Calu3 (cell line): ENCODE measurements at regions of chr2 and their contacts with region 1.

Region 1: DNA sequence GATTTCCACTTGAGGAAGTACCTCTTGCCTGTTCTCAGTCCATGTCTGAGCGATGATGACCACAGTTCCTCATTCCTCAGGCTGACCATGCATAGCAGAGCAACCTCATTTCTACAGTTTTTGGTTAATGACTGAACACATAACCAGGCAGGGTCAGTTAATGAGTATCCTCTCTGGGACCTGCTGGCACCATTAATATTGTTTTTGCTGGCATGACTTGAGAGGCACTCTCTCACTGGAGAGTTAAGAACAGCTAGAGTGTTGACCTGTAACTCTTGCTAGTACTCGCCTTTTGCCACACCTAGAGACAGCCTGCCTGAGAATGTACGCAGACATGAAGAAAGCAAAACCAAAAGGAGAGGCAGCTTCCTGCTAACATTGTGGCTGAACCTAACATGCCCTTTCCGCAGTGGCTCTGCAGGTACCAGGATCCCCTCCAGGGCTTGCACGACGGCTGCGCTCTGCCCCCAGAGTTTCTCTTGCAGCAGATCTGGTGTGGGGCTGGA is 23.9 kb downstream of the PECR start:
- DNase-seq: peak; percentile 85
- H3K4me3 Mint-ChIP-seq: peak overlapping the region; percentile 58
- H3K27ac Mint-ChIP-seq: peak overlapping the region; percentile 39
- H3K4me1 Mint-ChIP-seq: peaks cover 45% of the 10 kb centered on the region
- H3K27me3 Mint-ChIP-seq: no peaks in the 10 kb centered on the region
- CTCF ChIP-seq: no peak

Region 2: GRCh38 chr2:216034065-216034464 is 23.7 kb before region 1 on chr2:
- CTCF ChIA-PET with region 1: interaction called, 5 read pairs
- intact Hi-C with region 1: loop called (anchors 1 kb)
- DNase-seq: peak; percentile 82
- H3K4me3 Mint-ChIP-seq: no peak overlapping the region
- H3K27ac Mint-ChIP-seq: no peak overlapping the region
- H3K4me1 Mint-ChIP-seq: peaks cover 7% of the 10 kb centered on the region
- H3K27me3 Mint-ChIP-seq: no peaks in the 10 kb centered on the region
- CTCF ChIP-seq: peak; percentile 90

Region 3: DNA sequence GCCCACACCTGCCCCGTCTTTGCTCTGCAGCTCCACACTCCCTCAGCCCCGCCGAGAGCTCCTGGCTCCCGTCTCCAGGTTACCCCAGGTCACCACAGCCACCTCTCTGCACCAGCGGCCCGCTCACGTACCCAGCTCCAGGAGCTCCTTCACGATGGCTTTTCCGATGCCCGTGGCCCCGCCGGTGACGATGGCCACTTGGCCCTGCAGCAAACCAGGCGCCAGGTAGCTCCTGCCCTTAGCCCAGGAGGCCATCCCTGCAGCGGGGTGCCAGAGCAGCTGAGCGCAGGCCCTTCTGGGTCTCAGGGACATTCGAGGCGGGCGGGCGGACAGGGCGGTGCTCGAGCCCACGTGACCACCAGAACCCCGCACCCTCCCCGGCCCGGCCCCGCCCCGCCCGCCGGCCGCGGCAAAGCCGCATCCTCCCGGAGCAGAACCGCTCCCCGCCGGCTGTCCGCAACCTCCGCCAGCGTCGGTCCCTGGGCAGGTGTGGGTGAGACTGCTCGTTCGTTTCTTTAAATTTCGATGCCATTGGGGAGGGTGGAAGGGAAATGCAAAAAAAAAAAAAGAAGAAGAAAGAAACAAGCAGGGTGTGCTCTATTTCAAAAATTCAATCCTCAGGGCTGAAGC is 23.9 kb after region 1 on chr2 and contains the starts of genes PECR and TMEM169:
- CTCF ChIA-PET with region 1: interaction called, 7 read pairs
- intact Hi-C with region 1: loop called (anchors 2 kb)
- DNase-seq: peak; percentile 87
- H3K4me3 Mint-ChIP-seq: peak within 1 kb of the TSS; percentile 93
- H3K27ac Mint-ChIP-seq: peak within 1 kb of the TSS; percentile 55
- H3K4me1 Mint-ChIP-seq: peaks cover 34% of the 10 kb centered on the region
- H3K27me3 Mint-ChIP-seq: no peaks in the 10 kb centered on the region
- CTCF ChIP-seq: no peak
- total RNA-seq, gene PECR: 40.7 and 45.3 TPM in 2 replicates
- total RNA-seq, gene TMEM169: 8.0 and 9.0 TPM in 2 replicates

Region 4: GRCh38 chr2:216114714-216115557 is 57.2 kb after region 1 on chr2:
- CTCF ChIA-PET with region 1: interaction called, 8 read pairs
- intact Hi-C with region 1: loop called (anchors 2 kb)
- DNase-seq: peak; percentile 97
- H3K4me3 Mint-ChIP-seq: peak overlapping the region; percentile 84
- H3K27ac Mint-ChIP-seq: peak overlapping the region; percentile 99
- H3K4me1 Mint-ChIP-seq: peaks cover 50% of the 10 kb centered on the region
- H3K27me3 Mint-ChIP-seq: no peaks in the 10 kb centered on the region
- CTCF ChIP-seq: peak; percentile 87